Right cardiac atrium (tissue), 5 donors: ENCODE measurements at regions of chr2 and their contacts with region 1.

Region 1: DNA sequence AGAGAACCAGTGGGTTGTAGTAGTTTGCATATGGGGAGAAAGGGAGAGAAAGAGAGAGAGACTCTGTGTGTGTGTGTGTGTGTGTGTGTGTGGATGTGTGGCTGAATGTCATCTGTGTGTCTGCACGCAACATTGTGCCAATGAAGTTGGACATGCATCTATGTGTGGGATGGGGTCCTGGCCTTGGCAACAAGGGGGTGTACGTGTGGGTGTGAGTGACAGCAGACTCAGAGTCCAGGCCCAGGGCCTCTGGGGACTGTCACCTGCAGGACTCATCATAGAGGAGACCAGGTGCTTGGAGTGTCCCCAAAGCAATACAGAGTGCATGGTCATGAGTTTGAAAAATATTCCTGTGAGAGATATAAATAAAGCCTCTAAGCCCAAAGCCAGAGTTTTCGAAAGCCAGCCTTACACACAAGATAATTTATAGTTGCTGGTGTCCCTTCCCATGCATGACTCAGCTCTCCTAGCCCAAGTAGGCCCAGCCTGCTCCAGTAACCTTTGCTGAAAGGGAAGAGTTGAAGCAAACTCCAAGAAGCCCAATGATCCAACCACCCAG is 59.9 kb downstream of the TNP1 start:
- DNase-seq: no peak
- ATAC-seq: peak; percentile 29 to 41
- H3K4me3 ChIP-seq: no peak overlapping the region
- H3K27ac ChIP-seq: peak overlapping the region; percentile 65
- H3K4me1 ChIP-seq: peaks cover 24% of the 10 kb centered on the region
- H3K27me3 ChIP-seq: no peaks in the 10 kb centered on the region

Region 2: GRCh38 chr2:216507220-216508160 is 292.5 kb before region 1 on chr2:
- intact Hi-C with region 1: no loop called
- DNase-seq: no peak
- ATAC-seq: peak; percentile 21 to 61
- H3K4me3 ChIP-seq: no peak overlapping the region
- H3K27ac ChIP-seq: peak overlapping the region; percentile 29
- H3K4me1 ChIP-seq: peaks cover 3% of the 10 kb centered on the region
- H3K27me3 ChIP-seq: no peaks in the 10 kb centered on the region

Region 3: GRCh38 chr2:216761133-216761532 is 38.8 kb before region 1 on chr2:
- intact Hi-C with region 1: no loop called
- DNase-seq: no peak
- ATAC-seq: peak in 1 of 2 donors; percentile 24
- H3K4me3 ChIP-seq: no peak overlapping the region
- H3K27ac ChIP-seq: no peak overlapping the region
- H3K4me1 ChIP-seq: no peaks in the 10 kb centered on the region
- H3K27me3 ChIP-seq: no peaks in the 10 kb centered on the region

Region 4: GRCh38 chr2:217040099-217040498 is 240.1 kb after region 1 on chr2:
- intact Hi-C with region 1: loop called in 1 of 4 experiments (anchors 5 kb)
- DNase-seq: no peak
- ATAC-seq: no peak
- H3K4me3 ChIP-seq: no peak overlapping the region
- H3K27ac ChIP-seq: no peak overlapping the region
- H3K4me1 ChIP-seq: peaks cover 5% of the 10 kb centered on the region
- H3K27me3 ChIP-seq: no peaks in the 10 kb centered on the region

Region 5: GRCh38 chr2:217151509-217152206 is 351.7 kb after region 1 on chr2:
- intact Hi-C with region 1: no loop called
- DNase-seq: no peak
- ATAC-seq: peak in 1 of 2 donors; percentile 64
- H3K4me3 ChIP-seq: no peak overlapping the region
- H3K27ac ChIP-seq: no peak overlapping the region
- H3K4me1 ChIP-seq: no peaks in the 10 kb centered on the region
- H3K27me3 ChIP-seq: no peaks in the 10 kb centered on the region